Testis (tissue), 5 donors: ENCODE measurements at regions of chr2 and their contacts with region 1.

Region 1: GRCh38 chr2:85792783-85793441 is 39.1 kb downstream of the ATOH8 start:
- DNase-seq: no peak
- H3K4me3 ChIP-seq: no peak overlapping the region
- H3K27ac ChIP-seq: peak overlapping the region; percentile 49 to 85
- H3K4me1 ChIP-seq: peaks cover 46% of the 10 kb centered on the region
- H3K27me3 ChIP-seq: no peaks in the 10 kb centered on the region
- CTCF ChIP-seq: no peak
- POLR2A ChIP-seq: no peak

Region 2: GRCh38 chr2:85737481-85737880 is 55.4 kb before region 1 on chr2:
- intact Hi-C with region 1: loop called (anchors 5 kb)
- DNase-seq: peak; percentile 54
- H3K4me3 ChIP-seq: no peak overlapping the region
- H3K27ac ChIP-seq: peak overlapping the region in 1 of 2 donors; percentile 7
- H3K4me1 ChIP-seq: peaks cover 11% of the 10 kb centered on the region
- H3K27me3 ChIP-seq: no peaks in the 10 kb centered on the region
- CTCF ChIP-seq: no peak
- POLR2A ChIP-seq: no peak